Tibial artery (tissue), 4 donors: ENCODE measurements at regions of chr3 and their contacts with region 1.

Region 1: GRCh38 chr3:86785386-86785785 is 205.6 kb downstream of the VGLL3 start:
- DNase-seq: no peak
- H3K4me3 ChIP-seq: no peak overlapping the region
- H3K27ac ChIP-seq: no peak overlapping the region
- H3K4me1 ChIP-seq: peaks cover 0 to 11% (median 0%) of the 10 kb centered on the region in 4 donors
- H3K27me3 ChIP-seq: no peaks in the 10 kb centered on the region
- CTCF ChIP-seq: peak; percentile 39 to 52

Region 2: GRCh38 chr3:87082796-87083440 is 297.5 kb after region 1 on chr3:
- intact Hi-C with region 1: loop called (anchors 2 kb)
- DNase-seq: no peak
- H3K4me3 ChIP-seq: no peak overlapping the region
- H3K27ac ChIP-seq: no peak overlapping the region
- H3K4me1 ChIP-seq: no peaks in the 10 kb centered on the region
- H3K27me3 ChIP-seq: no peaks in the 10 kb centered on the region
- CTCF ChIP-seq: peak; percentile 70 to 75

Region 3: DNA sequence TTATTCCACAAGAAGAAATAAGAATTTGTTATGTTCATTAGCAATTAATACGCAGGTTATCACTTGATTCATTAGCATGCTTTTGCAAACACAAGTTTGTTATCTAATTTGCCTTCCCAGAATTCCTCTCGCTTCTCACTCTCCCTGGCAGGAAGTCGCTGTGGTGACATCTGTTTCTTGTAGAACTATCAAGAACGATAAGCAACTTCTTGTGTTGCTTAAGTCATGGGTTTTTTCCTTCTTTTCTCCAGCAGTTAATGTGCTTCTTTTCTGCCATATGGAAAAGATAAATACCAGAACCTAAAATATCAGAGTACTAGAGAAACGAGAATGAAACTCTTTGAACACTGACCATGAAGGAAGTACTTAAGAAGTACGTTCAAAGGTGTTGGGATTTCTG is 341.9 kb after region 1 on chr3:
- intact Hi-C with region 1: no loop called
- DNase-seq: no peak
- H3K4me3 ChIP-seq: no peak overlapping the region
- H3K27ac ChIP-seq: no peak overlapping the region
- H3K4me1 ChIP-seq: no peaks in the 10 kb centered on the region
- H3K27me3 ChIP-seq: no peaks in the 10 kb centered on the region
- CTCF ChIP-seq: no peak